Heart right ventricle (tissue), 16 donors: ENCODE measurements at regions of chr17 and their contacts with region 1.

Region 1: GRCh38 chr17:55845385-55845784 is 94.5 kb downstream of the PCTP start:
- DNase-seq: peak; percentile 37 to 51
- ATAC-seq: peak; percentile 71 to 91 (median 84)
- H3K4me3 ChIP-seq: peak overlapping the region in 7 of 10 donors; percentile 6 to 39 (median 36)
- H3K27ac ChIP-seq: no peak overlapping the region
- H3K4me1 ChIP-seq: peaks cover 0 to 7% (median 0%) of the 10 kb centered on the region in 9 donors
- H3K27me3 ChIP-seq: no peaks in the 10 kb centered on the region
- CTCF ChIP-seq: peak in 8 of 9 donors; percentile 40 to 76 (median 60)

Region 2: GRCh38 chr17:56325313-56326000 is 480.1 kb after region 1 on chr17:
- intact Hi-C with region 1: loop called in 2 of 10 experiments (anchors 10 kb)
- DNase-seq: no peak
- ATAC-seq: no peak
- H3K4me3 ChIP-seq: no peak overlapping the region
- H3K27ac ChIP-seq: no peak overlapping the region
- H3K4me1 ChIP-seq: peaks cover 0 to 21% (median 0%) of the 10 kb centered on the region in 9 donors
- H3K27me3 ChIP-seq: peaks cover 0 to 28% (median 10%) of the 10 kb centered on the region in 7 donors
- CTCF ChIP-seq: no peak

Region 3: DNA sequence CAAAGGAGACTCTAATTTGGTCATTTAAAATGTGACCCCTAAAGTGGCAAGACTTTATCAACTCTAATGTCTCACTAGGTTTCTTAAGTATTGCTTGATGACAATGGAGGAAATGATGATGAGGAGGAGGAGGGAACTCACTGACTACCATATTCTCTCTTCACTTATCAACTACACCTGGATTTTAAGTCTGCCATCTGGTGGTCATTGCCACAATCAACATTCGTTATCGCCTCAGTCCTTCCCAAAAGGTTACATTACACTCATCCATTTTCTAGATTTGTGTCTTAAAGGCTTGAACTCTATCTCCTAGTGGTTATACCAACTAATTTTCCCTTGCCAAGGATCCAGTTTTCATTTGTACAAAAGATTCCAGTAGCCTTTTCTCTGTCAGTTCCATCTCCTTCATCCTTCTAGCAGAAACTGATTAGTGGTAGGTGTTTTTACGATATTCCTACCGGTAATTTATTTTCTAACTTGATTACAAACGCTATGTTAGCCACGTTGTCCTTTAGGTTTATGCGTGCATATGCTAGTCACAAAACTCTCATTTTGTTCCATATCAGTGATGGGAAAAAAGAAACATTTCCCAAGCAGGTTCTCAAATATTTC is 633.6 kb after region 1 on chr17:
- intact Hi-C with region 1: loop called in 5 of 10 experiments (anchors 2 to 10 kb)
- DNase-seq: no peak
- ATAC-seq: no peak
- H3K4me3 ChIP-seq: no peak overlapping the region
- H3K27ac ChIP-seq: no peak overlapping the region
- H3K4me1 ChIP-seq: no peaks in the 10 kb centered on the region
- H3K27me3 ChIP-seq: peaks cover 0 to 29% (median 0%) of the 10 kb centered on the region in 7 donors
- CTCF ChIP-seq: peak in 7 of 9 donors; percentile 35 to 59 (median 45)

Region 4: GRCh38 chr17:56679115-56679766 is 833.9 kb after region 1 on chr17:
- intact Hi-C with region 1: loop called in 1 of 10 experiments (anchors 10 kb)
- DNase-seq: no peak
- ATAC-seq: peak in 6 of 8 donors; percentile 25 to 83 (median 60)
- H3K4me3 ChIP-seq: peak overlapping the region in 8 of 10 donors; percentile 13 to 43 (median 34)
- H3K27ac ChIP-seq: no peak overlapping the region
- H3K4me1 ChIP-seq: peaks cover 0 to 25% (median 8%) of the 10 kb centered on the region in 9 donors
- H3K27me3 ChIP-seq: peaks cover 7 to 93% (median 73%) of the 10 kb centered on the region in 7 donors
- CTCF ChIP-seq: peak in 7 of 9 donors; percentile 52 to 68 (median 58)